Calu3 (cell line): ENCODE measurements at regions of chr14 and their contacts with region 1.

Region 1: DNA sequence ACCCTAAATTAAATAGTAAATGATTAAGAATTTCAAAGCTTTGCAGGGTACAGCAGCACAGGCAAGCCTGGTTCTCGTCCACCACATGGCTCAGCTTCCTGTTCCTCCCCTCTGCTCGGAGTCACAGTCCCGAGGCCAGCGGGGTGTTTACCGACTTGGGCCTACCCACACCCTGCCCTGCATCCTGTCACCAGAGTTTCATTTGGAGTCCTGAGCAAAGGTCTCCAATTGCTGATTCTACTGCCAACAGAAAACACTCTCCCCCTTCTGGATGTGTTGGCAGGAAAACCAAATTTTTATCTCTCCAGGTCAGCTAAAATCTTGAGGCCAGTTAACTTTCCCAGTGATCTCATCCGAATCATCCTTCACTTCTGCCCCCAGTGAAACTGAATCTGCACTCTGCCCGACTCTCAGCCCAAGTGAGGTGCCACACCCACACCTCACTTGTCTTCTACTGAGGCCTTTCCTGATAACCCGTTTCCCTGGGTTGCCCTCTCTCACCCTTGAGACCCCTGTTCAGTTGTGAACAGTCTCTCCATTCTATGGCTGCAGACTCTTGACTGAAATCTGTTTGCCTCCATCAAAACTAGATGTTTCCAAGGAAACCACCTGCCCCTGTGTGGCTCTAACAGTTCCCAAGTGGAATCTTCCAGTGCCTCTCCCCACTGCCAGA is 71.2 kb downstream of the VCPKMT start:
- DNase-seq: peak; percentile 78
- H3K4me3 Mint-ChIP-seq: peak overlapping the region; percentile 15
- H3K27ac Mint-ChIP-seq: peak overlapping the region; percentile 86
- H3K4me1 Mint-ChIP-seq: peaks cover 58% of the 10 kb centered on the region
- H3K27me3 Mint-ChIP-seq: no peaks in the 10 kb centered on the region
- CTCF ChIP-seq: no peak

Region 2: DNA sequence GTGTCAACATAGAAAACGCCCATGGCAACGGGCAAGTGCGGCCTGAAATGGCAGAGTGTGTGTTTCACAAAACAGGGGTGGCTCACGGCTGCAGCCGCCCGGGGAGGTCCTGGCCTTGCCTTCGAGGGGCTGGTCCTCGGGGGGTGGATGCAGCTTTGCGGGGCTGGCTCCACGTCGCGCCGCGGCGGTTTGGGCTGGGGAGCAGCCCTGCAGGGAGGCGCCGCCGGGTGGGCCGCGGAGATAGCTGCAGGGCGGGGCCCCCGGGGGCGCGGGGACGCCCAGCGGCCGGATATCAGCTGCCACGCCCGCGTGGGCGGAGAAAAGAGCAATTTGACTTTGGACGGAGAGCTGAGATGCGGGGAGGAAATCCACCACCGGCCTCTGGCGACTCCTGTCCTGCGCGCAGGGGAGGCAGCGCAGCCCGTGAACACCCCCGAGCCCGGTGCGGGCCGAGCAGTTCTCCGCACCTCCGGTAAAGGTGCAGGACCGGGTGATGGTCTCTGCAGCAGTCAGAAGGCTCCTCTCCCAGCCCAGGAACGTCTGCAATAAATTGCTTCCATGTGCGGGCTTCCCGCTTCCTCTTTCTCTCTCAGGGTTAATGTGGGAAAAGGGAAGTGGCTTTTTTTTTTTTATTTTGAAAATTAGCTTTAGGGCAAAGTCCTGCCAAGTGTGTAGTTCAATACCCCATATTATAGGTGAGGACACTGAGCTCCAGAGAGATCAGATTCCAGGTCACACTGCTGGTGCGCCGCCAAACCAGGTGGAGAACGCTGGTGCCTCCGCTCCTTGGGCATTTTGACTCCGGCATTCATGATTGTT is 41.8 kb before region 1 on chr14:
- CTCF ChIA-PET with region 1: no interaction called
- intact Hi-C with region 1: loop called (anchors 2 kb)
- DNase-seq: peak; percentile 86
- H3K4me3 Mint-ChIP-seq: peak overlapping the region; percentile 69
- H3K27ac Mint-ChIP-seq: peak overlapping the region; percentile 99
- H3K4me1 Mint-ChIP-seq: peaks cover 66% of the 10 kb centered on the region
- H3K27me3 Mint-ChIP-seq: no peaks in the 10 kb centered on the region
- CTCF ChIP-seq: no peak

Region 3: DNA sequence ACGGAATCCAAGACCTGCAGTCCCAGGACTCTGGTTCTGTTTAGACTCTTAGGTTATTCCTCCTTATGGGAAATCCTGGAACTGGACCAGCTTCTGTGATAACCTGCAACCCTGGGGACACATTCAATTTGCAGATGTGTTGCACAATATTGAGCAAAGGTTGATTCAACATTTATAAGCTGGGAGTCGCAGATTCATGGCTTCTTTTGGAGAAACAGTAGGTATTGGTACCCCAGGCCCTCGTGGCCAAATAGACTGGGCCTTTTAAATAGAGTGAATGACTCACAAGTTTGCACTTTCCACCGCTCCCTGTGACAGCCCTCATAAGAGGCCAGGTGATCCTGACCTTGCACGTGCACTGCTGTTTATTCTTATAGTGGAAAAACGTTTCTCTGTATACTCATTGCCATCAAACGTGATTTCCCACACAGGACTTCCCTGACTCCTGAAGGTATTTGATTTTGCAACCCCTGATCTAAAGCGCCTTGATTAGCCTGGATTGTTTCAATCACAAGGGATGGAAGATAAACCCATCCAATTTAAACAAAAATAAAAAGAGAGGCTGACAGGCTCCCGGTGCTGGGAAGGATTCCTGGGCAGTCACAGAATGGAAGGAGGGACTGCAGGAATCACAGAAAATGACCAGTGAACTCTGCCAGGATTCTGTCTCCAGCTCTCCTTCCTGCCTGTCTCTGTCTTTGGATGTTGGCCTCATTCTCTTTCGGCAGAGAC is 26.8 kb before region 1 on chr14:
- CTCF ChIA-PET with region 1: no interaction called
- intact Hi-C with region 1: loop called (anchors 5 kb)
- DNase-seq: peak; percentile 65
- H3K4me3 Mint-ChIP-seq: no peak overlapping the region
- H3K27ac Mint-ChIP-seq: peak overlapping the region; percentile 78
- H3K4me1 Mint-ChIP-seq: peaks cover 55% of the 10 kb centered on the region
- H3K27me3 Mint-ChIP-seq: no peaks in the 10 kb centered on the region
- CTCF ChIP-seq: no peak

Region 4: GRCh38 chr14:50101417-50101816 is 56.2 kb after region 1 on chr14:
- CTCF ChIA-PET with region 1: no interaction called
- intact Hi-C with region 1: loop called (anchors 5 kb)
- DNase-seq: no peak
- H3K4me3 Mint-ChIP-seq: no peak overlapping the region
- H3K27ac Mint-ChIP-seq: peak overlapping the region; percentile 67
- H3K4me1 Mint-ChIP-seq: peaks cover 30% of the 10 kb centered on the region
- H3K27me3 Mint-ChIP-seq: no peaks in the 10 kb centered on the region
- CTCF ChIP-seq: no peak